ENCODE measurements at regions of chr6 and their contacts with region 1.

Region 1: DNA sequence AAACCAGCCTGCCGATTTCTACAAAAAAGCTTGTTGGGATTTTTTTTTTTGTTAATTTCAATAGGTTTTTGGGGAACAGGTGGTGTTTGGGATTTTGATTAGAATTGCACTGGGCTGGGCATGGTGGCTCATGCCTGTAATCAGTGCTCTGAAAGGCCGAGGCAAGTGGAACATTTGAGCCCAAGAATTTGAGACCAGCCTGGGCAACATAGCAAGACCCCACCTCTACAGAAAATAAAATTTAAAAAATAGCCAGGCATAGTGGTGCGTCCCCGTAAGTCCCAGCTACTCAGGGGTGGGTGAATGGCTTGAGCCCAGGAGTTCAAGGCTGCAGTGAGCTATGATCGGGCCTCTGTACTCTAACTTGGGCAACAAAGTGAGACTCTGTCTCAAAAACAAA is 40.5 kb upstream of the ASF1A start:
- DNase-seq: no peak
- H3K4me3 ChIP-seq: no peak overlapping the region
- H3K27ac ChIP-seq: no peak overlapping the region
- H3K4me1 ChIP-seq: no peaks in the 10 kb centered on the region
- H3K27me3 ChIP-seq: no peaks in the 10 kb centered on the region
- CTCF ChIP-seq: no peak
- POLR2A ChIP-seq: no peak

Region 2: GRCh38 chr6:117960877-117961276 is 892.5 kb before region 1 on chr6:
- CTCF ChIA-PET with region 1: no interaction called
- POLR2A ChIA-PET with region 1: no interaction called
- dilution Hi-C with region 1: no loop called
- intact Hi-C with region 1: loop called (anchors 5 kb)
- DNase-seq: no peak
- H3K4me3 ChIP-seq: no peak overlapping the region
- H3K27ac ChIP-seq: no peak overlapping the region
- H3K4me1 ChIP-seq: no peaks in the 10 kb centered on the region
- H3K27me3 ChIP-seq: no peaks in the 10 kb centered on the region
- CTCF ChIP-seq: no peak
- POLR2A ChIP-seq: no peak

Region 3: DNA sequence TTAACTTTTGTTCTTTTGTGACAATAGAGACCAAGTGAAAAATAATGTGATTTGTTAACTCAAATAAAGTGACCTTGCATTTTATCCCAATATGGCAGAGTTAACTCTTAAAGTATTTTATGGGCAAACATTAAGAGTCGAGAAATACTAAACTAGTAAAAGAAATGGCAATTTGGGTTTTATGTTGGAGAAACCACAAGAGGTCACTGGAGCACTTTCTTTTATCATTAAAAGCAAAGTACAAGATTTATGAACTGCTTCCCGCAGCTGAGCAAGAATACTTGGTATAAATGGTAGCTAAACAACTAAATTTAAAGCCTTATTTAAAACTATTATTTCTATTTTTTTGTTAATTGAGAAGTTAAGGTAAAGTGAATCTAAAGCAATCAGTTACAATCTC is 115.0 kb after region 1 on chr6:
- CTCF ChIA-PET with region 1: no interaction called
- POLR2A ChIA-PET with region 1: no interaction called
- dilution Hi-C with region 1: no loop called
- intact Hi-C with region 1: no loop called
- DNase-seq: peak; percentile 44
- H3K4me3 ChIP-seq: no peak overlapping the region
- H3K27ac ChIP-seq: no peak overlapping the region
- H3K4me1 ChIP-seq: no peaks in the 10 kb centered on the region
- H3K27me3 ChIP-seq: no peaks in the 10 kb centered on the region
- CTCF ChIP-seq: peak; percentile 7 to 28
- POLR2A ChIP-seq: no peak

Region 4: DNA sequence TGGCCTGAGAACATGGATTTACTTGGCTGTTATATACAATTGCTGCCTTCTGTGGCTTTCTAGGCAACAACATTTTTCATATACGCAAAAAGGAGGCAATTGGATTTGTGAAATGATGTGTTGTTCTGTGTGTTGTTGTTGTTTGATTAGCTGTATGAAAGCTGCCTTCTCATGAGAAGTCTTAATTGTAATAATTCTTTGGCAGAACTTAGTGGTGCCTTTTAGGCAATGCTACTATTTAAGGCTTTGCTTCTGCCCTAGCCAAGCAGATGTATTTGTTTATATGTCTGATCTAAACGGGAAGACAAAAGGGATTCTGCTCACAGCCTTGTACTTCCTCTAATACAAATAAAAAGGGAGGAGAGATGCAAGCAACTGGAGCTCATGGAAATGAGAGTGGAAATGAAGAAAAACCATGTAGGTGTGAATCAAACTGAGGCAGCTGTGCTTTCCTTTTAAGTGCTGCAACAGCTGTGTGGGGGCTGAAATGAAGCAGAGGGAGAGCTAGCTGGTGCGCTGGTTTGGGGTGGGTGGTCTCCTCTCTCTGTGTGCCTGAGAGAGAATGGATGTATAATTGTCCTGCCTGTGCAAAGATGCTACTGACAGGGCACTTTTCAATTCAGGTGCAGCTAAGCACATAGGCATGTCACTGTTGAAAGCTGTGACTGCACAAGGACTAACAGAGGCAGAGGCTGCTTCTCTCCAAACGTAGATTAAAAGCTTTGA is 883.1 kb after region 1 on chr6:
- CTCF ChIA-PET with region 1: no interaction called
- POLR2A ChIA-PET with region 1: no interaction called
- dilution Hi-C with region 1: no loop called
- intact Hi-C with region 1: no loop called
- DNase-seq: no peak
- H3K4me3 ChIP-seq: no peak overlapping the region
- H3K27ac ChIP-seq: no peak overlapping the region
- H3K4me1 ChIP-seq: no peaks in the 10 kb centered on the region
- H3K27me3 ChIP-seq: no peaks in the 10 kb centered on the region
- CTCF ChIP-seq: no peak
- POLR2A ChIP-seq: no peak

Measured in endothelial cell of umbilical vein (primary cell).